ENCODE measurements at regions of chr5 and their contacts with region 1.

Region 1: GRCh38 chr5:57137401-57137800 is 36.5 kb upstream of the GPBP1 start:
- DNase-seq: no peak

Region 2: DNA sequence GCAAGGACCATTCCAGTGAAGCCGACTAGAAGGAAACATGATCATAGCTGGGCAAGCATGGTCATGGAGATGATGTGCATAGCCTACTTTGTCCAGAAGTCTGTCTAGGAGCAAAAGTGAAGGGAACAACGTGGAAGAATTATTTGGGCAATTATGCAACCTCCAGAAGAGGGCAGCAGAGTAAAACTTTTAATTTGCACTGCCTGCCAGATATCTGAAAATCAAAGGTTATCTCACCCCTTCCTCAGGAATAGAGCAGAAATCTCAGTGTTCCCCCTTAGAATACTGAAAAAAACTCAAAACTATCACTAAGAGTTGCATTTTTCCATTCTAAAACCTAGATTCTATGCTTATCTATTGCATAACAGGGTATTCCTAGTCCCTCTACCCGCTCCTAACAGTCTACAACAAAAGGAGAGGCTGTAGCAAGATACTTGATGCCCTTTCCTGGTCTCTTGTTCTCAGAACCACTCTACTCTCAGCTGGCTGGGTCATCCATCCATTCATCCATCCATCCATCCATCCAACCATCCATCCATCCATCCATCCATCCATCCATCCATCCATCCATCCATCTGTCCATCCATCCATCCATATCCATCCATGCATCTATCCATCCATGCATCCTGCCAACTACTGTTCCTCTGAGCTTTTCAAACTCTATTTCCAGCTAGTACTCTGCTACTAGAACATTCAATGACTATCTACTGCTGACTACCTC is 236.4 kb before region 1 on chr5:
- CTCF ChIA-PET with region 1: interaction called, 14 read pairs
- POLR2A ChIA-PET with region 1: interaction called, 4 read pairs
- DNase-seq: peak; percentile 55